Naive thymus-derived CD4-positive, alpha-beta T cell (primary cell): ENCODE measurements at regions of chr22 and their contacts with region 1.

Region 1: GRCh38 chr22:39490135-39490798 is 11.8 kb upstream of the MIEF1 start:
- DNase-seq: peak; percentile 43 to 83 (median 69)
- ATAC-seq: peak; percentile 97
- H3K4me3 ChIP-seq: no peak overlapping the region
- H3K4me3 Mint-ChIP-seq: peak overlapping the region in 1 of 10 donors; percentile 59
- H3K27ac ChIP-seq: no peak overlapping the region
- H3K27ac Mint-ChIP-seq: peak overlapping the region in 2 of 9 donors; percentile 82 to 88
- H3K4me1 ChIP-seq: no peaks in the 10 kb centered on the region
- H3K4me1 Mint-ChIP-seq: peaks cover 6 to 17% (median 14%) of the 10 kb centered on the region in 7 donors
- H3K27me3 ChIP-seq: no peaks in the 10 kb centered on the region
- H3K27me3 Mint-ChIP-seq: no peaks in the 10 kb centered on the region

Region 2: GRCh38 chr22:39395936-39396796 is 94.1 kb before region 1 on chr22:
- CTCF ChIA-PET with region 1: interaction called, 21 read pairs
- POLR2A ChIA-PET with region 1: interaction called, 3 read pairs
- intact Hi-C with region 1: loop called in 1 of 2 experiments (anchors 1 kb)
- DNase-seq: no peak
- ATAC-seq: no peak
- H3K4me3 ChIP-seq: no peak overlapping the region
- H3K4me3 Mint-ChIP-seq: peak overlapping the region in 1 of 10 donors; percentile 34
- H3K27ac ChIP-seq: no peak overlapping the region
- H3K27ac Mint-ChIP-seq: peak overlapping the region in 2 of 9 donors; percentile 5 to 6
- H3K4me1 ChIP-seq: peaks cover 6 to 9% of the 10 kb centered on the region in 2 donors
- H3K4me1 Mint-ChIP-seq: peaks cover 5 to 19% (median 11%) of the 10 kb centered on the region in 7 donors
- H3K27me3 ChIP-seq: no peaks in the 10 kb centered on the region
- H3K27me3 Mint-ChIP-seq: peaks cover 0 to 2% (median 0%) of the 10 kb centered on the region in 5 donors

Region 3: GRCh38 chr22:39414886-39415285 is 75.4 kb before region 1 on chr22:
- CTCF ChIA-PET with region 1: interaction called, 5 read pairs
- POLR2A ChIA-PET with region 1: interaction called, 4 read pairs
- intact Hi-C with region 1: loop called in 1 of 2 experiments (anchors 5 kb)
- DNase-seq: no peak
- ATAC-seq: no peak
- H3K4me3 ChIP-seq: no peak overlapping the region
- H3K4me3 Mint-ChIP-seq: peak overlapping the region; percentile 14 to 78 (median 72)
- H3K27ac ChIP-seq: peak overlapping the region; percentile 38
- H3K27ac Mint-ChIP-seq: peak overlapping the region in 6 of 9 donors; percentile 79 to 93 (median 89)
- H3K4me1 ChIP-seq: peaks cover 12 to 62% of the 10 kb centered on the region in 2 donors
- H3K4me1 Mint-ChIP-seq: peaks cover 41 to 91% (median 67%) of the 10 kb centered on the region in 7 donors
- H3K27me3 ChIP-seq: no peaks in the 10 kb centered on the region
- H3K27me3 Mint-ChIP-seq: no peaks in the 10 kb centered on the region

Region 4: GRCh38 chr22:39439170-39439569 is 51.1 kb before region 1 on chr22:
- CTCF ChIA-PET with region 1: interaction called, 3 read pairs
- POLR2A ChIA-PET with region 1: no interaction called
- intact Hi-C with region 1: loop called in 1 of 2 experiments (anchors 5 kb)
- DNase-seq: no peak
- ATAC-seq: peak; percentile 81
- H3K4me3 ChIP-seq: no peak overlapping the region
- H3K4me3 Mint-ChIP-seq: peak overlapping the region in 2 of 10 donors; percentile 20 to 29
- H3K27ac ChIP-seq: no peak overlapping the region
- H3K27ac Mint-ChIP-seq: peak overlapping the region in 1 of 9 donors; percentile 4
- H3K4me1 ChIP-seq: peaks cover 0 to 11% of the 10 kb centered on the region in 2 donors
- H3K4me1 Mint-ChIP-seq: peaks cover 3 to 19% (median 7%) of the 10 kb centered on the region in 7 donors
- H3K27me3 ChIP-seq: peaks cover 0 to 4% of the 10 kb centered on the region in 2 donors
- H3K27me3 Mint-ChIP-seq: peaks cover 0 to 10% (median 7%) of the 10 kb centered on the region in 5 donors

Region 5: DNA sequence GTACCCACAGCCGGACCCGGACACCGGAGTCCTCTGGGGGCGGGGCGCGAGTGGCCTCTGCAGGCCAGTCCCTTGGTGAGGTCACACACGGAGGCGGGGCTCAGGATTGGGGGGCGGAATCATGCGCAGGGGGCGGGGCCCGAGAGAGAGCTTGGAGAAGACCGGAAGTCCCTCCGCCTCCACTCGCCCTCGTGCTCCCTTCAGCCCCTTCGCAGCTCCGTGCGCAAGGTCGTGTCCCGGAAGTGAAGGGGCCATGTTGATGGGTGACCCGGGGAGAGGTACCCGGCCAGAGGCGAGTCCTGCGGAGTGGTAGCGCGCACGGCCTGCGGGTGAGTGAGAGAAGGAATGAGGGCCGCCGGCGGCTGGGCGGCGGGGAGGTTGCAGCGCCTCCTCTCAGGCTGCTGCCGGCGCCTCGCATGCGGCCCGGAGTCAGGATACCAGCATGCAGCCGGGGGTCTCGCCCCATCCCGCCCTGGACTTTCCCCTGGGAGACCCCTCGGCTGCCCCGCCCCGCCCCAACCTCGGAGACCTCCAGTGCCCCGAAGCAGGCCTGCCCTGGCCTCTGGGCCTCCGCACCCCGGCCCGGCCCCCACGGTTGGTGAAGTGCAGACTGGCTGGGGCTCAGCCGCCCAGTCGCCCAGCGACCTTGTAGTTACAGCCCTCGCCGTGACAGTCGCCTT is 12.0 kb after region 1 on chr22 and contains the start of gene MIEF1:
- CTCF ChIA-PET with region 1: interaction called, 5 read pairs
- POLR2A ChIA-PET with region 1: interaction called, 14 read pairs
- intact Hi-C with region 1: loop called in 1 of 2 experiments (anchors 1 kb)
- DNase-seq: peak; percentile 71 to 95 (median 78)
- ATAC-seq: peak; percentile 99
- H3K4me3 ChIP-seq: peak within 1 kb of the TSS; percentile 59
- H3K4me3 Mint-ChIP-seq: peak within 1 kb of the TSS; percentile 75 to 100 (median 94)
- H3K27ac ChIP-seq: peak within 1 kb of the TSS; percentile 79
- H3K27ac Mint-ChIP-seq: peak within 1 kb of the TSS; percentile 86 to 97 (median 96)
- H3K4me1 ChIP-seq: peaks cover 16 to 21% of the 10 kb centered on the region in 2 donors
- H3K4me1 Mint-ChIP-seq: peaks cover 23 to 57% (median 47%) of the 10 kb centered on the region in 7 donors
- H3K27me3 ChIP-seq: no peaks in the 10 kb centered on the region
- H3K27me3 Mint-ChIP-seq: peaks cover 0 to 7% (median 0%) of the 10 kb centered on the region in 5 donors
- total RNA-seq, gene MIEF1: 17.5 to 42.3 (median 37.3) TPM

Region 6: GRCh38 chr22:39514373-39514973 is 24.2 kb after region 1 on chr22:
- CTCF ChIA-PET with region 1: interaction called, 18 read pairs
- POLR2A ChIA-PET with region 1: interaction called, 5 read pairs
- intact Hi-C with region 1: loop called in 1 of 2 experiments (anchors 1 kb)
- DNase-seq: peak in 6 of 9 donors; percentile 18 to 55 (median 52)
- ATAC-seq: peak; percentile 72
- H3K4me3 ChIP-seq: no peak overlapping the region
- H3K4me3 Mint-ChIP-seq: no peak overlapping the region
- H3K27ac ChIP-seq: no peak overlapping the region
- H3K27ac Mint-ChIP-seq: peak overlapping the region in 5 of 9 donors; percentile 12 to 59 (median 23)
- H3K4me1 ChIP-seq: peaks cover 0 to 9% of the 10 kb centered on the region in 2 donors
- H3K4me1 Mint-ChIP-seq: peaks cover 11 to 43% (median 22%) of the 10 kb centered on the region in 7 donors
- H3K27me3 ChIP-seq: no peaks in the 10 kb centered on the region
- H3K27me3 Mint-ChIP-seq: no peaks in the 10 kb centered on the region